Activated CD4-positive, alpha-beta memory T cell treated with anti-CD3 and anti-CD28 coated beads for 36 hours (primary cell): ENCODE measurements at regions of chr2 and their contacts with region 1.

Region 1: DNA sequence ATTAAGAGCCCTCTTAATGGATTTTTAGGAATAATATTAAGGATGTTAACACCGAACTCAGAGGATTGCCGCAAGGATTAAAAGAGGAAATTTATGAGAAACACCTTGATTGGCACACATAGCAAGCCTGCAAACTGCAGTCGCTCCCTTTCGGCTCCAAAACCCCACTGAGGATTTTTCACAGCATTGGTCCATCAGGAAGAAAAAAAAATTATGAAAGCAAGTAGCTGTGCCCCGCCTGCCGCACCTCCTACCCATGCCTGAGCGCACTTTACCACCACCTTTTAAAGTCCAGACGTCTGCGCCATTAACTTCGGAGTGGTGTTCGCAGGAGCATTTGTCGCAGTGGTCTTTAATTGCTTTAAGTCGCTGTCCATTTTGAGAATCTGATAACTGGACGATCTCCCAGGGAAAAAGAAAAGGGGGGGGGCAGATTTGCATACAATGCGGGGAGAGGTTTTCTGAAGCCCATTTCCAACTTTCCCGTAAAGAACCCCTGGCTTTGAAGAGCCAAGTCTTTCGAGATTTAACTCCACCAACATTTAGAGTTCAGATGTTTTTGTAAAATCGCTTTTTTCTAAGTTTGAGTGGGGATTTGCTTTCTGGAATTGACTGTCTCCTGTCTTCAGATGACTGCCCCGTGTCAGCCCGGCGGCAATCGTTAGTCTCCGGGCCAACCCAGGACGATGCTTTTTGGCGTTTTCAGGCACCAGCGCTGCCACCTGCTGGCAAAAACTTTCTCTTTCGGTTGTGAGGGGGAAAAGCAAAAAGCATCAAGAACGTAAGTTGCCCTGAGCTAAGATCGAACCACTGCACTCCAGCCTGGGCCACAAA is 914 bp upstream of the TRABD2A start:
- DNase-seq: peak; percentile 95
- H3K4me3 Mint-ChIP-seq: peak overlapping the region; percentile 94
- H3K27ac Mint-ChIP-seq: peak overlapping the region; percentile 99
- H3K4me1 Mint-ChIP-seq: peaks cover 44% of the 10 kb centered on the region
- H3K27me3 Mint-ChIP-seq: no peaks in the 10 kb centered on the region

Region 2: GRCh38 chr2:84526562-84526961 is 355.2 kb before region 1 on chr2:
- CTCF ChIA-PET with region 1: interaction called, 4 read pairs
- POLR2A ChIA-PET with region 1: no interaction called
- intact Hi-C with region 1: loop called (anchors 1 kb)
- DNase-seq: no peak
- H3K4me3 Mint-ChIP-seq: no peak overlapping the region
- H3K27ac Mint-ChIP-seq: no peak overlapping the region
- H3K4me1 Mint-ChIP-seq: peaks cover 17% of the 10 kb centered on the region
- H3K27me3 Mint-ChIP-seq: no peaks in the 10 kb centered on the region

Region 3: GRCh38 chr2:84781942-84782716 is 99.7 kb before region 1 on chr2:
- CTCF ChIA-PET with region 1: no interaction called
- POLR2A ChIA-PET with region 1: no interaction called
- intact Hi-C with region 1: loop called (anchors 1 kb)
- DNase-seq: peak; percentile 75
- H3K4me3 Mint-ChIP-seq: no peak overlapping the region
- H3K27ac Mint-ChIP-seq: peak overlapping the region; percentile 80
- H3K4me1 Mint-ChIP-seq: peaks cover 72% of the 10 kb centered on the region
- H3K27me3 Mint-ChIP-seq: no peaks in the 10 kb centered on the region

Region 4: GRCh38 chr2:84840306-84840705 is 41.5 kb before region 1 on chr2:
- CTCF ChIA-PET with region 1: interaction called, 16 read pairs
- POLR2A ChIA-PET with region 1: interaction called, 3 read pairs
- intact Hi-C with region 1: no loop called
- DNase-seq: no peak
- H3K4me3 Mint-ChIP-seq: peak overlapping the region; percentile 46
- H3K27ac Mint-ChIP-seq: peak overlapping the region; percentile 63
- H3K4me1 Mint-ChIP-seq: peaks cover 82% of the 10 kb centered on the region
- H3K27me3 Mint-ChIP-seq: no peaks in the 10 kb centered on the region

Region 5: DNA sequence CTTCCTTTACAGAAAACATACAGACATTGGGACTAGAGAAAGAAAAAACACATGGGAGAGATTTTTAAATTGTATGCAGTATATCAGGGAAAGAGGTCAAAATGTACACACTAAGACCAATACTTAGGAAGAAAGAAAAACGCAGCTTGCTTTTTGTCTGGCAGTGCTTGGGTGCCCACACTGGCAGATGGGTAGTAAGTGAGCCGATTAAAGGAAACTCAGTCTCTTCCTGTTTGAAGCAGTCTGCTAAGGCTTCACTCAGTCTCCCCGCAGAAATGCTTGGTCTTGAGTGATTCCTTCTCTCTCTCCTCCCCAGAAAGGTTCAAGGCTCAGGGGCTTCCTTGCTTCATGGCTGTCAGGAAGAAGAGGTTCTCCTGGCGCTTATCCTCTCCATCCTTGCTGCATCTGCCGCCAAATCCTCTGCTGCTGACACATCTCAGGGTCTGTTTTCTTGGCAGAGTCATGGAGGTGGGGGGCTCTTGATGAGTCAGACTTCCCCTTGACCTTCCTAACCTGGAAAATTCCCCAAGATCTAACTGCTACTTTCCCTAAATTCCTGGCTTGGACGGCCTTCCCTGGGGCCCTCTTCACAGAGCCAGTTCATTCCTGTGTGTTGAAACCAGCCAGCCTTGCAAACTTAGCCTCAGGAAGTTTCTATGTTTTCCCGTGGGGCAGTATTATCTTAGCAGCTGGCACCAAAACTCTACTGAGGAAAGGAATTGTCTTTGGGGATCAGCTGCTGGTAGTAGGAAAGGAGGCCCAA is 13.1 kb after region 1 on chr2:
- CTCF ChIA-PET with region 1: interaction called, 15 read pairs
- POLR2A ChIA-PET with region 1: interaction called, 20 read pairs
- intact Hi-C with region 1: loop called (anchors 2 kb)
- DNase-seq: no peak
- H3K4me3 Mint-ChIP-seq: peak overlapping the region; percentile 30
- H3K27ac Mint-ChIP-seq: peak overlapping the region; percentile 85
- H3K4me1 Mint-ChIP-seq: peaks cover 59% of the 10 kb centered on the region
- H3K27me3 Mint-ChIP-seq: no peaks in the 10 kb centered on the region